A549 (cell line): ENCODE measurements at regions of chr11 and their contacts with region 1.

Region 1: DNA sequence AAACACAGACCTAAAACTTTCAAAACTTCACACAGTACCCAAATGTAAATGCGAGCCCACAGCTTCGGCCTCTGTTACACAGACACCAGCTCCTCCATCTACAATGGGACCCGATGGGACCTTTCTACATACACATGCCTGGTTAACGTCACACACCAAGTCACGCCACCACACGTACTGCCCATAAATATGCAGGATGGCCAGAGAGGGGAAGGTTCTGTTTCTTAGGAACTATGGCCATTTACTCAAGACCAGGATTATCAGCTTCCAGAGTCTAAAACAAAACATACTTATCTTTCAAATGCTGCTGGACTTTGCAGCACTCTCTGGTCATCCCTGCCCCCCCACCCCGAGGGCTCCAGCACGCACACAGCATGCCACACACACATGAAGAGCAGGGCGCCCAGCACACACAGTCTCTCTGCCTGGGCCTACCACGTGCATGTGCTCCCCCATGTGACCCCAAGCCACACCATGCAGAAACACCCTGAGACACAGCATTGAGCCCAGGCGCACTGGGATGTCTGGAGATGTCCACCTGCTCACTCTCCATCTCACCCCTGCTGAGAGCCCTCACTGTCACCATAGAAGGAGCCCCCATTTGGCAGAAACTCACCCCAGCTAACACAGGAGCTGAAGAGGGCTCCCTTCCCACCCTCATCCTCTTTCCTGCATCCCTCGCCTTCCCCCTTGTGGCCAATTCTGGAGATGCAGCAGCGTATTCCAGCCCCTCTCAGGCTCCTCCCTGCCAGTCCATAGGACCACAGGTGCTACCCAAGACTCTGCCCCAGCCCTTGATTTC is 61.8 kb downstream of the SLC22A12 start:
- DNase-seq: peak; percentile 71 to 92
- ATAC-seq: peak; percentile 71 to 90
- H3K4me3 ChIP-seq: no peak overlapping the region
- H3K27ac ChIP-seq: no peak overlapping the region
- H3K4me1 ChIP-seq: peaks cover 13% of the 10 kb centered on the region; the same call in 2 of the 3 replicates
- CTCF ChIP-seq: peak; percentile 89
- EP300 ChIP-seq: no peak
- POLR2A ChIP-seq: no peak
- RAD21 ChIP-seq: peak; percentile 91 to 93

Region 2: DNA sequence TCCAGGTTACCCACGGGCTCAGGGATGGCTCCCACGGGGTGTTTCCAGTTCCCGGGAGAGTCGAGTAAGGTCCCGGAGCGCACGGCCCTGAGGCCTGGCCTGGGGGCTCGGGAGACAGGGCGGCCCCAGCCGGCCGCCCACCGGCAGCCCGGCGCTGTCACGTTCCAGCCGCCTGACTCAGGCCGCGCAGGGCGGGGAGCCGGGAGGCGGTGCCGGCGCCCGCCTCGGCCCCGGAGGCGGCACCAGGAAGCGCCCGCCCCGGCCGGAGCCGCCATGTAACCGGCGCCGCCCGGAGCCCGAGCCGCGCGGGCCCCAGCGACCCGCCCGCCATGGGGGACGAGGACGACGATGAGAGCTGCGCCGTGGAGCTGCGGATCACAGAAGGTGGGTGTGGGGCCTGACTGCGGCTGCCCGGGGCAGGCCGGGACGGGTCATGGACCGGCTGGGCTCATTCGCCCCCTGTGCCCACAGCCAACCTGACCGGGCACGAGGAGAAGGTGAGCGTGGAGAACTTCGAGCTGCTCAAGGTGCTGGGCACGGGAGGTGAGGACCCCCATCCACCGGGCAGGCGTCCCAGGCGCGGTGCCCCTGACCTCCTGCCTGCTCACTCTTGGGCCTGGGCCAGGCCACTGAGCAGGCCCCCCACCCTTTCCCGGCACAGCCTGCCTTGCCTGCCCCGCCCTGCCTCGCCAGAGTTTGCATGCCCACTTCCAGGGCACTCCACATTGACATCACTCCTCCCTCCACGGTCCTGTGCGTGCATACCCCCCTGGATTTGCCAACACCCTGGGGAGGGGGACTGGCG is 293.7 kb before region 1 on chr11 and contains the start of gene RPS6KA4:
- CTCF ChIA-PET with region 1: interaction called, 17 read pairs
- POLR2A ChIA-PET with region 1: no interaction called
- DNase-seq: peak; percentile 47 to 71
- ATAC-seq: peak; percentile 70 to 80
- H3K4me3 ChIP-seq: peak within 1 kb of the TSS; percentile 73
- H3K27ac ChIP-seq: peak within 1 kb of the TSS; percentile 86 to 98
- H3K4me1 ChIP-seq: peaks cover 50% of the 10 kb centered on the region
- CTCF ChIP-seq: no peak
- EP300 ChIP-seq: no peak
- POLR2A ChIP-seq: peak; percentile 64
- RAD21 ChIP-seq: no peak
- polyA plus RNA-seq, gene RPS6KA4: 19.1 and 21.4 TPM in 2 replicates

Region 3: GRCh38 chr11:64372802-64373597 is 279.8 kb before region 1 on chr11:
- CTCF ChIA-PET with region 1: no interaction called
- POLR2A ChIA-PET with region 1: no interaction called
- DNase-seq: peak; percentile 88 to 90
- ATAC-seq: peak; percentile 96 to 100
- H3K4me3 ChIP-seq: peak overlapping the region; percentile 44
- H3K27ac ChIP-seq: peak overlapping the region; percentile 59 to 72
- H3K4me1 ChIP-seq: no peaks in the 10 kb centered on the region
- CTCF ChIP-seq: no peak
- EP300 ChIP-seq: no peak
- POLR2A ChIP-seq: peak; percentile 56; the same call in 1 of the 2 replicates
- RAD21 ChIP-seq: no peak

Region 4: DNA sequence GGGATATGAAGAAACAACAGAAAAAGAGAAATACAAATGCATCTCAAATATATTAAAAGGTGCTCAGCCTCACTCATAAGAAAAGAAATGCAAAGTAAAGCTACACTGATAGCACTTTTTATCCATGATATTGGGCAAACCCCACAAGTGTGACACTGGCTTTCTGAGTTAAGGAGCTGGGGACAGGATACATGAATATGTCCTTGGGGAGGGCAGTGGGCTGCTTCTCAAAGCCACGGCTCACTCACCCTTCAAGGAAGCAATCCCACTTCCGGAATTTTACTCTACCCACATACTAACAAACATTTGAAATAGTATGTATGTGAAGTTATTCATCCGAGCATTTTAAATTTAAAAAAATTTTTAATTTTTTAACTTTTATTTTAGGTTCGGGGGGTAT is 102.8 kb before region 1 on chr11:
- CTCF ChIA-PET with region 1: interaction called, 22 read pairs
- POLR2A ChIA-PET with region 1: no interaction called
- DNase-seq: no peak
- ATAC-seq: no peak
- H3K4me3 ChIP-seq: no peak overlapping the region
- H3K27ac ChIP-seq: no peak overlapping the region
- H3K4me1 ChIP-seq: peaks cover 30% of the 10 kb centered on the region
- CTCF ChIP-seq: no peak
- EP300 ChIP-seq: no peak
- POLR2A ChIP-seq: no peak
- RAD21 ChIP-seq: no peak

Region 5: GRCh38 chr11:64629796-64630562 is 22.8 kb before region 1 on chr11:
- CTCF ChIA-PET with region 1: interaction called, 80 read pairs
- POLR2A ChIA-PET with region 1: no interaction called
- DNase-seq: peak in 1 of 2 experiments; percentile 56
- ATAC-seq: peak in 1 of 2 experiments; percentile 67; a peak in 3 of 6 replicates
- H3K4me3 ChIP-seq: no peak overlapping the region
- H3K27ac ChIP-seq: no peak overlapping the region
- H3K4me1 ChIP-seq: no peaks in the 10 kb centered on the region
- CTCF ChIP-seq: no peak
- EP300 ChIP-seq: no peak
- POLR2A ChIP-seq: no peak
- RAD21 ChIP-seq: no peak

Region 6: GRCh38 chr11:64675450-64676260 is 22.9 kb after region 1 on chr11:
- CTCF ChIA-PET with region 1: interaction called, 175 read pairs
- POLR2A ChIA-PET with region 1: no interaction called
- DNase-seq: peak; percentile 61 to 64
- ATAC-seq: peak; percentile 84 to 91
- H3K4me3 ChIP-seq: no peak overlapping the region
- H3K27ac ChIP-seq: peak overlapping the region in 1 of 2 experiments; percentile 68; a peak in 3 of 6 replicates
- H3K4me1 ChIP-seq: peaks cover 12% of the 10 kb centered on the region
- CTCF ChIP-seq: no peak
- EP300 ChIP-seq: no peak
- POLR2A ChIP-seq: no peak
- RAD21 ChIP-seq: no peak

Region 7: DNA sequence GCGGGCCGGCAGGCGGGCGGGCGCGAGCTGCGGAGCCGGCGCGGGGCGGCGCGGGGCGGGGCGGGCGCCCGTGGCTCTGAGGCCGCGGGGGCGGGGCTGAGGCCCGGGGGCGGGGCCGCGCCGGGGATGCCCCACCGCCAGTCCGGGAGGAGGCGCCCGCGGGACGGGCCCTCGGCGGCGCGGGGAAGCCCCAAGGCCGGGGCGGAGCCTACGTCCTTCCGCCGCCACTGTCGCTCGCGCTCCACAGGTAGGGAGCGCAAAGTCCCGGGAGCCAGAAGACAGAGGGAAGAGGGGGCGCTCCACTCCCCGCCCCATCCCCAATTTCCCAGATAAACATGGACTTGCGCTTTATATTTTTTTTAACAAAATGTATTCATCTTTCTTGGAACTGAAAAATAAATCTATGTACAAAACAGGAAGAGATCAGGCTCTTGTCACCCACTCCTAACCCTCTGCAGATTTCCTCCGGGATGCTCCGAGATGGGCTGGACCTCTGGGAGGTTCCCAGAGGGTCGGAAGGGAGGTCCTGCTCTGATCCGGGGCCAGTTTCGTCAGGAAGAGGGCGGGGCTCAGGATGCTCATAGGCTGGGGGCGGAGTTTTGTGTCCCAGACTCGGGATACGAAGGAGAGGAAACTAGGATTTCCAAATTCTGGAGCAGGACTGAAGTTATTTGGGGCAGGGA is 150.5 kb after region 1 on chr11 and contains the start of gene MAP4K2:
- CTCF ChIA-PET with region 1: no interaction called
- POLR2A ChIA-PET with region 1: no interaction called
- DNase-seq: peak; percentile 77 to 85
- ATAC-seq: peak; percentile 80 to 89
- H3K4me3 ChIP-seq: peak within 1 kb of the TSS; percentile 61
- H3K27ac ChIP-seq: peak within 1 kb of the TSS; percentile 77 to 89
- H3K4me1 ChIP-seq: peaks cover 23% of the 10 kb centered on the region
- CTCF ChIP-seq: peak; percentile 34; the same call in 2 of the 3 replicates
- EP300 ChIP-seq: no peak
- POLR2A ChIP-seq: no peak
- RAD21 ChIP-seq: 0 out of 5 replicates have a peak, but pooled peaks of 1 of the 2 experiments have one; percentile 19
- polyA plus RNA-seq, gene MAP4K2: 9.4 and 10.2 TPM in 2 replicates